IMR-90 (cell line): ENCODE measurements at regions of chr2 and their contacts with region 1.

Region 1: GRCh38 chr2:67840460-67841068 is 222.2 kb downstream of the C1D start:
- DNase-seq: peak; percentile 82
- ATAC-seq: peak; percentile 92
- H3K4me3 ChIP-seq: no peak overlapping the region
- H3K27ac ChIP-seq: no peak overlapping the region
- H3K4me1 ChIP-seq: peaks cover 4% of the 10 kb centered on the region; the same call in 1 of the 2 replicates
- H3K27me3 ChIP-seq: no peaks in the 10 kb centered on the region
- CTCF ChIP-seq: peak; percentile 95
- POLR2A ChIP-seq: 0 out of 2 replicates have a peak, but pooled peaks have one; percentile 36
- RAD21 ChIP-seq: peak; percentile 98

Region 2: DNA sequence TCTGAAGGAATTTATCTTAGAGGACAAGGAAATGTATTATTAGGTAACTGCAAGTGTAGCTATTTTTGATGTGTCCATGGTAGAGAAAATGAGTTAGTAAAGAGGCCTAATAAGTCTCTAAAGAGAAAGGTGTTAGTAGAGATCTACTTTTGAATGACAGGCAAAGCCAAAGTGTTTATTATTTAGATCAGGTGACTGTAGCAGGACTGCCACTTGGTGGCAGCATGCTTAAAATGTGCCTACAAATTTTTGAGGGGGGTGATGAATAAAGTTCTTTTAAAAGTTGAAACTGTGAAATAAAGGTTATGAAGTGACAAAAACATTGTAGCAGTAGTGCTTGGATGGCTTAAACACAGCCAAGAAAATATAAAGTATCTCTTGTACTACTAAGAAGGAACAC is 1827.1 kb before region 1 on chr2:
- CTCF ChIA-PET with region 1: no interaction called
- POLR2A ChIA-PET with region 1: no interaction called
- dilution Hi-C with region 1: no loop called
- in situ Hi-C with region 1: no loop called
- intact Hi-C with region 1: loop called (anchors 10 kb)
- DNase-seq: no peak
- ATAC-seq: no peak
- H3K4me3 ChIP-seq: no peak overlapping the region
- H3K27ac ChIP-seq: no peak overlapping the region
- H3K4me1 ChIP-seq: no peaks in the 10 kb centered on the region
- H3K27me3 ChIP-seq: no peaks in the 10 kb centered on the region
- CTCF ChIP-seq: 0 out of 2 replicates have a peak, but pooled peaks have one; percentile 18
- POLR2A ChIP-seq: no peak
- RAD21 ChIP-seq: no peak

Region 3: DNA sequence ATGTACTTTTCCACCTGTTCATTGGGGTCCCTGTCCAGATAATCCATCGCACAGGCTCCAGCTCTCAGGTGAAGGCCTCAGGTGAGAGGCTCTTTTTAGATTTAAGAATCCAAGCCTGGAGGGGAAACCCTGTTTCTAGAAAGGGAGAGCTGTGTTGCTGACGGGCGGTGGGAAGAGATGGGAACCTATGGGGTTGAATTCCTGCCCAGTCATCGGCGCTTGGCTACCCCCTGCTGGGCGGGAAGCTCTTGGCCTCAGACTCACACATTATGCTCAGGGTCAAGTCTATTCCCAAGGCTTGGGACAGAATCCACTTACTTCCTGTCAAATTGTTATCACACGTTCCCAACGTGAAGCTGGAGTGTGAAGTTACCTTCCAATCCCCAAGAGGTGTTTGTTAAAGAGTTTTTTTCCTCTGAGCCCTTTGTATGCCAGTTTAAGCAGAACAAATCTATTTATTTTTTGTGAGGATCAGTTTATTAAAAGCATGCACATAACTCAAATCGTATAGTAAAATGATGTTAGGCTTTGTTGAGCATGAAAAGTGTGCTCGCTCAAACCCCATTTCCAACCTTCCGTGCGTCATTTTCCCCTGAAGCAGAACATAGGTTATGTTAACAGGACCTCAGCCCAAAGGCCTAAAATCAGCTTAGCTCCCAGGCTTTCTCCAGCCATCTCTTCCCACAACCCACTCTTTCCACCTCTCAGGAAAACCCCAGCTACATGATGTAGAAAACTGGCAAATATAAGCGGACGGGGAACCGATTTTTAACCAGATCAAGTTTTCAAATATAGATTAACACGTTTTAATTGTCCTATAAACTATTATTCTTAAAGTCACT is 625.1 kb before region 1 on chr2:
- CTCF ChIA-PET with region 1: no interaction called
- POLR2A ChIA-PET with region 1: no interaction called
- dilution Hi-C with region 1: no loop called
- in situ Hi-C with region 1: no loop called
- intact Hi-C with region 1: loop called (anchors 5 kb)
- DNase-seq: peak; percentile 92
- ATAC-seq: peak; percentile 95
- H3K4me3 ChIP-seq: no peak overlapping the region
- H3K27ac ChIP-seq: peak overlapping the region; percentile 86
- H3K4me1 ChIP-seq: peaks cover 16% of the 10 kb centered on the region
- H3K27me3 ChIP-seq: no peaks in the 10 kb centered on the region
- CTCF ChIP-seq: peak; percentile 88
- POLR2A ChIP-seq: no peak
- RAD21 ChIP-seq: peak; percentile 95

Region 4: DNA sequence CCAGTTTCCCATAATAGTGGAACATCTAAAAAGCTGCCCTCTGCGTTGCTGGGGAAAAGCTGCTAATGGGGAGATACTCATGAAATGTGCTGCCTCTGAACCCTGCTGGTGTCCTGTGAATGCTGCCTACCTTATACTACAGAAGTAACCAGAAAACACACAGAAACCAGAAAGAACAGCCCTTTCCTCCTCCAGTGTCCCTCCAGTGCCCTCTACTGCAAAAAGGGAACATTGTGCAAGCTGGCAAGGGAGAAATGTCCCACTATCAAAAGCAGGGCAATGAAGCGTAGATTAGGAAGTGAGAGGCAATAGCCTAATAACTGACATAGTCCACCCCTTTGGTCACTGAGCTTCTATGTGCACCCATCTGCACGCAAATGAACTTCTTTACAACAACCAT is 606.1 kb before region 1 on chr2:
- CTCF ChIA-PET with region 1: no interaction called
- POLR2A ChIA-PET with region 1: no interaction called
- dilution Hi-C with region 1: no loop called
- in situ Hi-C with region 1: loop called (anchors 10 kb)
- intact Hi-C with region 1: loop called (anchors 1 kb)
- DNase-seq: peak; percentile 72
- ATAC-seq: peak; percentile 94
- H3K4me3 ChIP-seq: no peak overlapping the region
- H3K27ac ChIP-seq: no peak overlapping the region
- H3K4me1 ChIP-seq: peaks cover 2% of the 10 kb centered on the region; the same call in 1 of the 2 replicates
- H3K27me3 ChIP-seq: no peaks in the 10 kb centered on the region
- CTCF ChIP-seq: peak; percentile 75
- POLR2A ChIP-seq: no peak
- RAD21 ChIP-seq: peak; percentile 86

Region 5: DNA sequence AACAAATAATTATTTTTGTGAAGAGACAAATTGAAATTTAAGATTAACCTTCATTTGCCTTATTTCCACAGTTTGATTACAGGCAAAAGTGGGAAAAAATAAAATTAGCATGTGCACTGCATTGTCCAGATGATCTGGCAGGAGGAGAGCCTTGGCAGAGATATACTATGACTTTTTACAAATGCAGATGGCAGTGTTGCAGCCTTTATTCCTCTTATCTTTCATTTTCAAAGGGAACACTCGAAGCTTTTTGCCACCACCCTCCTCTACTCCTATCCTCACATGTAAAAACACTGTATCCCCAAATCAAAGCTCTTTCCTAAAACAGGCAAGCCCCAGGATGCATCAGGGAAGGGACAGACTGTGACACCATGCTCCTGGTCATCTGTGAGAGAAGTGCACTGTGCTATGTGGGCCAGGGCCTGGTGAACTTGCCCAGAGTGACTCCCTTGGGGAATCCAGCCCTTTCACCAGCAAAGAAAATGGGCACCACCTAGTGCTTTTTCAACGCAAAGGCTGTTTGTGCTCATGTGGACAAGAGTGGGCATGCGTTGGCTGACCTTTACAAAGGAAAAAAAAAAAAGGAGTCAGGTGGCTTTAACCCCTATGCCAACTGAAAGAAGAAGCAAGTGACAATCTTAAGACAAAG is 518.1 kb before region 1 on chr2:
- CTCF ChIA-PET with region 1: no interaction called
- POLR2A ChIA-PET with region 1: no interaction called
- dilution Hi-C with region 1: no loop called
- in situ Hi-C with region 1: no loop called
- intact Hi-C with region 1: loop called (anchors 10 kb)
- DNase-seq: peak; percentile 76
- ATAC-seq: peak; percentile 87
- H3K4me3 ChIP-seq: no peak overlapping the region
- H3K27ac ChIP-seq: peak overlapping the region; percentile 47; the same call in 1 of the 2 replicates
- H3K4me1 ChIP-seq: peaks cover 5% of the 10 kb centered on the region
- H3K27me3 ChIP-seq: no peaks in the 10 kb centered on the region
- CTCF ChIP-seq: peak; percentile 57
- POLR2A ChIP-seq: no peak
- RAD21 ChIP-seq: peak; percentile 76

Region 6: DNA sequence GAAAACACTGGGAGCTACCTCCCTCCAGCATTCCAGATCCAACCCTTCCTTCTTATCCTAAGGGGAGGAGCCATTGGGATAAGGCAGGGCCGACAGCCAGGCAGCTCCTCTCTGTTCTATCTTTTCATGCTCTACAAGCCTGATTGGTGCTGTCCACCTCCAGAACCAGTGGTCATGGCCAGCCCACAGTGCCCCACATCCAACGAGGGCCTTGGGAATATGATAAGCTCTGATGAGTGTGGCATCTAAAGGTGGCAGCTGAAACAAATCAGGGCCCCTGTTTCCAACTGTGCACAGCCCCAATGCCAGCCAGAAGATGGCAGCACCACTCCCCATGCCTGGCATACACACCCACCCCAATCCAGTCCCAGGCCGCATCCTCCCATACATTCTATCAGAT is 107.0 kb before region 1 on chr2:
- CTCF ChIA-PET with region 1: interaction called, 12 read pairs
- POLR2A ChIA-PET with region 1: no interaction called
- dilution Hi-C with region 1: no loop called
- in situ Hi-C with region 1: no loop called
- intact Hi-C with region 1: loop called (anchors 2 kb)
- DNase-seq: no peak
- ATAC-seq: peak; percentile 57
- H3K4me3 ChIP-seq: no peak overlapping the region
- H3K27ac ChIP-seq: no peak overlapping the region
- H3K4me1 ChIP-seq: no peaks in the 10 kb centered on the region
- H3K27me3 ChIP-seq: no peaks in the 10 kb centered on the region
- CTCF ChIP-seq: peak; percentile 33; the same call in 1 of the 2 replicates
- POLR2A ChIP-seq: no peak
- RAD21 ChIP-seq: peak; percentile 40